ENCODE measurements at regions of chr4 and their contacts with region 1.

Region 1: DNA sequence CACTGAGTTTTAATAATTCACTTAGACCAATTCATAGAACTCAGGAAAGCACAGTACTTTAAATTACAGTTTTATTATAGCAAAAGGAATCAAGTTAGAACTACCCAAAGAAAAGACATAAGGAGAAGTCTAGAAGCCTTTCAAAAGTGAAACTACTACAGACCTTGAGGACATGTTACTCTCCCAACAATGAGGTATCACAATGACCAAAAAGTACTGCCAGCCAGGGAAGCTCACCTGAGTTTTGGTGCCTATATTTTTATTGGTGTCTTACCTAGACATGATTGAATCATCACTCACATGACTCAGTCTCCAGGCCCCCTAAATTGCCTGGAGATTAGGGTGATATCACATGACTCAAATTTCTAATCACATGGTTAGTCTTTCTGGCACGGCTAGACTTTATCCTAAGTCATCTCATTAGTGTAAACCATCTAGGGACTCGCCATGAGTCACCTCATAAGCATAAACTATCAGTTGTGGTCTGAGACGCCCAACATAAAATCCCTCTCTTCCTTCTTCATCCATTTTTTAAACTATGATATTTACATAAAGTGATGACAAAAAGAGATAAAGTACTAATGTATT is 372.3 kb downstream of the TMA16 start:
- DNase-seq: no peak
- H3K4me3 ChIP-seq: no peak overlapping the region
- H3K27ac ChIP-seq: no peak overlapping the region
- H3K4me1 ChIP-seq: no peaks in the 10 kb centered on the region
- H3K27me3 ChIP-seq: no peaks in the 10 kb centered on the region
- CTCF ChIP-seq: no peak
- EP300 ChIP-seq: no peak
- POLR2A ChIP-seq: no peak

Region 2: GRCh38 chr4:163922302-163922701 is 55.5 kb after region 1 on chr4:
- in situ Hi-C with region 1: no loop called
- intact Hi-C with region 1: no loop called
- DNase-seq: no peak
- H3K4me3 ChIP-seq: no peak overlapping the region
- H3K27ac ChIP-seq: no peak overlapping the region
- H3K4me1 ChIP-seq: no peaks in the 10 kb centered on the region
- H3K27me3 ChIP-seq: no peaks in the 10 kb centered on the region
- CTCF ChIP-seq: no peak
- EP300 ChIP-seq: no peak
- POLR2A ChIP-seq: no peak

Region 3: DNA sequence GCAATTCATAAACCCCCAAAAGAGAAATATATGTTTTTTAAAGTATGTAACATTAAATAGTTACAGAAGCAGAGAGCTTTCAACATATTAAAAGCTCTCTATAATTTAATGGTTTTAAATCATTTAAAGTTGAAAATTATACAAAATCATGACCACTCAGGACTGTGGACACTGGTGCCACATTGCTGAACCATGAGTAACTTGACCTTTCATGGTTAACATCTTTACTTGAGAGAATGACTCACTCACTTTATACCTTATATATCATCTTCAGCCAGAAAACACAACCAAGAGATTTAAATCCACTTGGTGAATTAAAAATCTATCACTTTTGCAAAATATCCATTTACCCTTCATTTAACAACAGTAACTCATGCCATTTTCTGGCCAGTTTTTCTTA is 302.8 kb after region 1 on chr4:
- in situ Hi-C with region 1: no loop called
- intact Hi-C with region 1: no loop called
- DNase-seq: no peak
- H3K4me3 ChIP-seq: no peak overlapping the region
- H3K27ac ChIP-seq: no peak overlapping the region
- H3K4me1 ChIP-seq: no peaks in the 10 kb centered on the region
- H3K27me3 ChIP-seq: no peaks in the 10 kb centered on the region
- CTCF ChIP-seq: no peak
- EP300 ChIP-seq: no peak
- POLR2A ChIP-seq: no peak

Region 4: DNA sequence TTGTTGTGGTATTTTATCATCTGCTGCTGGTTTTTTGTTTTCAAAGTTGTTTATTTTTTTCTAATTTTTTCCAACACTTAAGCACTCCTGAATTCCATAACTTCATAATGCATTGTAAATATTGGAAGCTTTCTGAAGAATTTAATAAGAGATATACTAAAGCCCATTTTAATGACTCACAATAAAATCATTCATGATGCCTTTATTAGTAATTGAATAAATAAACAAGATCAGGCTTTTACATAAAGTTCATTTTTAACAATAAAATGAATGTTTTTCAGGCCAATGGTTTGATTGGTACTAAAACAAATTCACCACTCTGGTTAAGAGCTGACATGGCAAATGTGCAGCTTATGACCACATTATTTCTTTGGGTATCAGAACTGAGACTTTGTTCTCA is 478.9 kb after region 1 on chr4:
- in situ Hi-C with region 1: no loop called
- intact Hi-C with region 1: loop called (anchors 10 kb)
- DNase-seq: no peak
- H3K4me3 ChIP-seq: no peak overlapping the region
- H3K27ac ChIP-seq: no peak overlapping the region
- H3K4me1 ChIP-seq: no peaks in the 10 kb centered on the region
- H3K27me3 ChIP-seq: no peaks in the 10 kb centered on the region
- CTCF ChIP-seq: no peak
- EP300 ChIP-seq: no peak
- POLR2A ChIP-seq: no peak